Kidney (tissue), 22 donors: ENCODE measurements at regions of chr2 and their contacts with region 1.

Region 1: DNA sequence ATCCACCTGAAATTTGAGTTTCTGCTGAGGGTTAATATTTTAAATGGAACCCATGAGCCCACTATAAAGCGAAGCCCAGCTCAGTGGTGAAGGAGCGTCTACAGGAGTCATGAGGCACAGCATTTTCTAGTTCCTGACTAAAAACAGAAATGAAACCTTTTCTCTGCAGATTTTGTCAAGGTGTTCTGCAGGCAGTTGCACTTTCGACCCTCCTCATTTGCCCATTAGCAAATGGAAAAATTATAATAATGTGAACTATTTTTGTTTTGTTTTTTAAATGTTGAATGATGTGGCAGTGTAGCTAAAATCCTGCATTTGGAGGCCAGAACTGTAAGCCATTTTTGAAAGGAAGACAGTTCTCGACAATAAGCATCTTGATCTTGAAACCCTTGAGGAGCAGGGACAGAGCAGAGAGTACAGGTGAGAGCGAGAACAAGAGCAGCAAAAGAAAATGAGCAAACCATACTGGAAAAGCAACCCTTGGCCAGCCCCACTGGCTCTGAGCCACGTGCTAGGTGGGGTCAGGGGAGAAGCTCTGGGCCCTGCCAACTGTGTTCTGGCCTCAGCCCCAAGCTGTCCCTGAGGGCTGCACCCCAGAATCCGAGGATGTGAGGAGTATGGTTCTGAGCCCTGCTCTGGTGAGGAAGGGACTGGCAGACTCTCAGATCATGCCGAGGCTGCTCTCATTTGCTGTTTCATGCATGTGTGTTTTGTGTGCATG is 26.4 kb upstream of the COPS8 start:
- DNase-seq: no peak
- H3K4me3 ChIP-seq: no peak overlapping the region
- H3K27ac ChIP-seq: no peak overlapping the region
- H3K4me1 ChIP-seq: peaks cover 0 to 2% (median 2%) of the 10 kb centered on the region in 3 donors
- H3K27me3 ChIP-seq: no peaks in the 10 kb centered on the region
- CTCF ChIP-seq: no peak

Region 2: GRCh38 chr2:236343400-236344161 is 715.7 kb before region 1 on chr2:
- intact Hi-C with region 1: loop called (anchors 5 kb)
- DNase-seq: peak in 4 of 5 donors; percentile 76 to 88 (median 80)
- H3K4me3 ChIP-seq: no peak overlapping the region
- H3K27ac ChIP-seq: no peak overlapping the region
- H3K4me1 ChIP-seq: peaks cover 0 to 4% (median 2%) of the 10 kb centered on the region in 3 donors
- H3K27me3 ChIP-seq: no peaks in the 10 kb centered on the region
- CTCF ChIP-seq: peak; percentile 84